Sciatic nerve (tissue), 2 donors: ENCODE measurements at regions of chr17 and their contacts with region 1.

Region 1: GRCh38 chr17:44533533-44534246 is 23.6 kb upstream of the FZD2 start:
- DNase-seq: peak; percentile 96
- ATAC-seq: peak; percentile 96

Region 2: DNA sequence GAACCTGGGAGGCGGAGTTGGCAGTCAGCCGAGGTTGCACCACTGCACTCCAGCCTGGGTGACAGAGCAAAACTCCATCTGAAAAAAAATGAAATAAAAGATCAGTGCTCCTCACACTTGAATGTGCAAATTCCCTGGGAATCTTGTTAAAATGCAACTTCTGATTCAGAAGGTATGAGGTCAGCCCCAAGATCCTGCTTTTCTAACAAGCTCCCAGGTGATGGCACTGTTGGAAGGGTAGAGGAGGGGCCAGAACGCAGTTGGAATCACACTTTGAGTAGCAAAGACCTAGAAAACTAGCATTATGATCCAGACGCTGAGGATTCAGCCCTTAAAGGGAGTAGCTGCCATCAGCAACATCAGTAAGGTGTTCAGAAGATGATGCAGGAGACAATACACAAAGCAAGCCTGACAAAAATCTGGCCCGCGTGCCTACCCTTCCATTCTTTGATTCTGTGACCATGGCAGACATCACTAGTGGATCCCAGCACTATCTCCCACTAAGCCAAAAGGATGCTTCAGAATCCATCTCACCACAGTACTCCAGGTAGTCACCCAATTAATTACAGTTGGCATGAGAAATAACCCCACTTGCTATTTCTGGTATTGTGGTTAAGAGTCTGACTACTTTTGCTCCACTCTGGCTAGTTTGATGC is 89.5 kb after region 1 on chr17:
- intact Hi-C with region 1: loop called (anchors 1 kb)
- DNase-seq: no peak
- ATAC-seq: no peak

Region 3: DNA sequence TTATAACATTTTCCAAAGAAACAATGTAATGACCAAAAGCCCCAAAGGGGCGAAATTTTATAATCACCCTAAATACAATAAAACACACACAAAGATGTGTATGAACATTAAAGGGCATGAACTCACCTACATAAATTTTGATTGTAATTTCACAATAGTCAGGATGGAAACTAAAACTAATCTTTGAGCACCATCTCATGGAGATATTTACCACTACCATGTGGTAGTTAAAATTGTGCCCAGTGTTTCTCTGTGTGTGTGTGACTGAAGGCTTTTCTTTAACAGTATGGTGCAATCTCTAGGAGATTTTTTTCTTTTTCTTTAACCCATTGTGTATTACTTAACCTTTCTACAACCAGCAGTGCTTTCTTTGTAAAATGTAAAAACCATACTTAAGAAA is 102.9 kb after region 1 on chr17:
- intact Hi-C with region 1: loop called (anchors 5 kb)
- DNase-seq: no peak
- ATAC-seq: peak; percentile 95

Region 4: DNA sequence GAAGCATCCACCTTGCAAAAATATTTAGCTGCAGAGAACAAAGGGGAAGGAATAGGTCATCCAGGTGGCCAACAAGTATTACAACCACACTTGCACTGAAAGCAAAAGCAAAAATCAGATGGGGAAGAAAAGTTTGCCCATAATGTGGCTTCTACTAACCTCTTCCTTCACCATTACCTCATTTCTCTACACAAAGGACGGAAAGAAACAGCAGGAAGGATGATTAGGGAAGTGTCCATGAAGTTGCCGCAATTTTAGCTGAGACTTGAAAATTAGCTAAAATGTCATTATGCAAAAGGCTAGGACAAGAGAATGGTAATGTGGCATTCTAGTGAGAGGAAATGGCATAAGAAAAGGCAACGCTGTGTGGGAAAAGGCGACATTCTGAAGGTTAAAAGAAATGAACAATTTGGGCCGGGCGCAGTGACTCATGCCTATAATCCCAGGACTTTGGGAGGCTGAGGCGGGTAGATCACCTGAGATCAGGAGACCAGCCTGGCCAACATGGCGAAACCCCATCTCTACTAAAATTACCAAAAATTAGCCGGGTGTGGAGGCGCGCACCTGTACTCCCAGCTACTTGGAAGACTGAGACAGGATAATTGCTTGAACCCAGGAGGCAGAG is 1645.8 kb after region 1 on chr17:
- intact Hi-C with region 1: no loop called
- DNase-seq: no peak
- ATAC-seq: no peak